CD4-positive, alpha-beta memory T cell (primary cell): ENCODE measurements at regions of chr4 and their contacts with region 1.

Region 1: GRCh38 chr4:55853484-55854046 is at the start of gene EXOC1:
- DNase-seq: peak; percentile 93 to 96 (median 93)
- H3K4me3 ChIP-seq: peak within 1 kb of the TSS; percentile 83 to 97
- H3K4me3 Mint-ChIP-seq: peak within 1 kb of the TSS in 4 of 8 donors; percentile 40 to 67 (median 46)
- H3K27ac ChIP-seq: peak within 1 kb of the TSS; percentile 81
- H3K27ac Mint-ChIP-seq: peak within 1 kb of the TSS in 5 of 7 donors; percentile 36 to 96 (median 84)
- H3K4me1 ChIP-seq: peaks cover 44% of the 10 kb centered on the region
- H3K4me1 Mint-ChIP-seq: peaks cover 30 to 47% (median 38%) of the 10 kb centered on the region in 4 donors
- H3K27me3 ChIP-seq: no peaks in the 10 kb centered on the region
- H3K27me3 Mint-ChIP-seq: no peaks in the 10 kb centered on the region
- total RNA-seq, gene EXOC1: 41.9 to 50.7 TPM

Region 2: DNA sequence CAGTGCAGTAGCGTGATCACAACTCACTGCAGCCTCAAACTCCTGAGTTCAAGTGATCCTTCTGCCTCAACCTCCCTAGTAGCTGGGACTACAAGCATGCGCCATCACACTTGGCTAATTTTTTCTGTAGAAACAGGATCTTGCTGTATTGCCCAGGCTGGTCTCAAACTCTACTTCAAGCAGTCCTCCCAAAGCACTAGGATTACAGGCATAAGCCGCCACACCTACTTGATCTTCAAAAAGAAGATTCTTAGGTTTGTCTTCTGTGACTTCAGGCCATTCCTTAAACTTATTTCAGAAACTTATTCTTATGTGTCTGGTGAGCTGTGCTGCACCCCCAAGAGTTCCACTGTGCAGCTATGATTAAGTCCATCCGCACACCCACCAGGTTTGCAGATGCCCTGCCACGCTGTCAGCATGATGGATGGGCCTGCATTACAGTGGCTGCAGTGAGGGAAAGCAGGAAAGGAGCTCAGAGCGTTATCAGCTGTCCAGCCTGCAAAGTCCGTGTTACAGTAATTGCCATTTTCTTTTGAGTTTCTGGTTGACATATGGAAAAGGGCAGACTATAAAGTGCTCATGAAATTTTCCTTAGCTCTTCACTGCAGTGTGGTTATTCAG is 387.1 kb after region 1 on chr4:
- CTCF ChIA-PET with region 1: no interaction called
- POLR2A ChIA-PET with region 1: no interaction called
- intact Hi-C with region 1: no loop called
- DNase-seq: no peak
- H3K4me3 ChIP-seq: no peak overlapping the region
- H3K4me3 Mint-ChIP-seq: no peak overlapping the region
- H3K27ac ChIP-seq: no peak overlapping the region
- H3K27ac Mint-ChIP-seq: no peak overlapping the region
- H3K4me1 ChIP-seq: no peaks in the 10 kb centered on the region
- H3K4me1 Mint-ChIP-seq: no peaks in the 10 kb centered on the region
- H3K27me3 ChIP-seq: no peaks in the 10 kb centered on the region
- H3K27me3 Mint-ChIP-seq: peaks cover 2 to 11% of the 10 kb centered on the region in 2 donors

Region 3: GRCh38 chr4:56821381-56822243 is 968.0 kb after region 1 on chr4 and contains the start of gene SPINK2:
- CTCF ChIA-PET with region 1: no interaction called
- POLR2A ChIA-PET with region 1: no interaction called
- intact Hi-C with region 1: loop called (anchors 5 kb)
- DNase-seq: peak; percentile 62 to 75 (median 67)
- H3K4me3 ChIP-seq: peak within 1 kb of the TSS in 1 of 2 donors; percentile 53
- H3K4me3 Mint-ChIP-seq: peak within 1 kb of the TSS; percentile 76 to 83 (median 82)
- H3K27ac ChIP-seq: no peak within 1 kb of the TSS
- H3K27ac Mint-ChIP-seq: peak within 1 kb of the TSS in 6 of 7 donors; percentile 15 to 72 (median 52)
- H3K4me1 ChIP-seq: peaks cover 27% of the 10 kb centered on the region
- H3K4me1 Mint-ChIP-seq: peaks cover 14 to 35% (median 24%) of the 10 kb centered on the region in 4 donors
- H3K27me3 ChIP-seq: no peaks in the 10 kb centered on the region
- H3K27me3 Mint-ChIP-seq: peaks cover 0 to 2% of the 10 kb centered on the region in 2 donors
- total RNA-seq, gene SPINK2: 3.2 to 3.6 TPM